Astrocyte of the cerebellum (primary cell): ENCODE measurements at regions of chr9 and their contacts with region 1.

Region 1: GRCh38 chr9:133673258-133673655 is 37.1 kb downstream of the DBH start:
- DNase-seq: no peak
- H3K4me3 ChIP-seq: no peak overlapping the region
- CTCF ChIP-seq: no peak

Region 2: DNA sequence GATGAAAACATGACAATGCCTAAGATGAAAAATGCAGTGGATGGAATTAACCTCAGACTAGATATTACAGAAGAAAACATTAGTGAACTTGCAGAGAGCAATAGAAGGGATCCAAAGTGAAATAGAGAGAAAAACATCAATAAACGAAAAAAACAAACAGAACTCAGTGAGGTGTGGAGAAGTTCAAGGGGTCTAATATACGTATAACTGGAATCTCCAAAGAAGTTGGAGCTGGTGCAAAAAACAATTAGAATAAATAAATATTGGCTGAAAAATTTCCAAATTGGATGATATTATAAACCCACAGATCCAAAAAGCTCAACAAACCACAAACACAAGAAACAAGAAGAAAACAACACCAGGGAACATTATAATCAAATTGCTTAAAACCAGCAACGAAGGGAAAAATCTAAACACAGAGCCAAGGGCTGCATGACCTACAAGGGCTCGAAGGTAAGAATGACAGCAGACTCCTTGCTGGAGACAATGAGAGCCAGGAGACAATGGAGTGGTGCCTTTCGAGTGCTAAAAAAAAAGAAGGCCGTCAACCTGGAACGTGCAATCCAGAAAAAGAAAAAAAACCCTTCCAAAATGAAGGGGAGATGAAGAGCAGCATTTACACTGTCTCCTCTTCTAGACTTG is 75.8 kb before region 1 on chr9:
- in situ Hi-C with region 1: loop called (anchors 5 kb)
- DNase-seq: no peak
- H3K4me3 ChIP-seq: no peak overlapping the region
- CTCF ChIP-seq: no peak

Region 3: DNA sequence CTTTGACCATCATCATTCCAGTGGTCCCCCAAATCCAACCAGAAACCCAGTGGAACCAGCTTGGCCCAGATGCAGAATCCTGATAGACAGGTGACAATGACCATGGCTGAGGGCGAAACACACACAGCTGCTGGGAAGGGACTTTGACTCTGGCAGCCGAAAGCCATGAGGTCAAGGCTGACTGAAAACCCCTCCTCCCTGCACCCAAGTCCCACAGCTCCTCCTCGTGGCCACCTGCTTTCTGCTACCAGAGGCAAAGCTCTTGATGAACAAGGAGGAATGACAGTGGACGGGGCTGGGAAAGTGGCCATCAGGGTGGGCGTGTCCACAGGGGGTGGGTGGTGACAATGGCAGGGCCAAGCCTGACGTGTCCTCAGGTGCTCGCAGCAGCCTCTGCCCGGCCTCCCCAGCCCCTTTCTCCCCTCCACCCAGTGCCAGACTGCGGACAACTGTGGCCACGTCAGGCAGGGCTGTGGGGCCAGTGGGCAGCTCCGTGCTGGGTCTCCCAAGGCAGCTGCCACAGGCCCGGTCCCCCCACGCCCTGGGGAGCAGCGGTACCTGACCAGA is 95.7 kb after region 1 on chr9:
- in situ Hi-C with region 1: no loop called
- DNase-seq: no peak
- H3K4me3 ChIP-seq: no peak overlapping the region
- CTCF ChIP-seq: no peak